ENCODE measurements at regions of chr2 and their contacts with region 1.

Region 1: DNA sequence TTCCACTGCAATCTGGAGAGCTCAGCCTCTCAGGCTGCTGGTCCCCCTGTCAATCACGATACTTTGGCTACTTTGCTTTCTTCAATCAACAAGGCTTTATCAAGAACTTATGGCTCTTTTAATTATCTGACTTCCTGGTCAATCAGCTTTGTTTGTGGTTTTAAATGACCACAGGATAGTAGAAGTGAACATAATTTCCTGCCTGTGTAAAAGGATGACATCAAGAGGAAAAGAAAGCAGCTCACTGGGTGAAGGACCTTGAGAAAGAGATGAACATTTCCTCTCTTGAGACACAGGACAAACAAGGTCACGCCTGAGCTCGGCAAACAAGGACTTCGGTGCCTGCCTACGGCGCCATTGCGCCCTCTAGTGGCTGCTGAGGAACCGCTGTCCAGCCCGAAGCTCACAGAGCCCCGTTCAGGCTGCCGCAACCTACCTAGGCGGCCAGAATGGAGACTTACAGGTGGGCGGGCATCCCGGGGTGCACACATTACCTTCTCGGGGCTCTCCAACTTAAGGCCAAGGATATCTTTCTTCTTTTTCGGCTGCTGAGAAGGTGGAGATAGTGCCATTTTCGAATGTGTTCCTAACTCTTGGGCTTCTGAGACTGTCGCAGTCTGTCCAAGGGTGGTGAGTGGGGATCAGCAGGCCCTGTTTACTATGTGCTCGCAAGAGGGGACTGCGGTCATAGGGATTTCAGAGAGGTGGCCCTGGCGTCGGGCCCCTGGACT is 54.0 kb downstream of the IL1RL2 start:
- DNase-seq: peak; percentile 77
- H3K4me3 Mint-ChIP-seq: no peak overlapping the region
- H3K27ac Mint-ChIP-seq: peak overlapping the region; percentile 40
- H3K4me1 Mint-ChIP-seq: peaks cover 29% of the 10 kb centered on the region
- H3K27me3 Mint-ChIP-seq: no peaks in the 10 kb centered on the region

Region 2: GRCh38 chr2:101823347-101823791 is 417.4 kb before region 1 on chr2:
- intact Hi-C with region 1: loop called (anchors 5 kb)
- DNase-seq: peak; percentile 51
- H3K4me3 Mint-ChIP-seq: peak overlapping the region; percentile 18
- H3K27ac Mint-ChIP-seq: peak overlapping the region; percentile 21
- H3K4me1 Mint-ChIP-seq: peaks cover 63% of the 10 kb centered on the region
- H3K27me3 Mint-ChIP-seq: no peaks in the 10 kb centered on the region

Region 3: DNA sequence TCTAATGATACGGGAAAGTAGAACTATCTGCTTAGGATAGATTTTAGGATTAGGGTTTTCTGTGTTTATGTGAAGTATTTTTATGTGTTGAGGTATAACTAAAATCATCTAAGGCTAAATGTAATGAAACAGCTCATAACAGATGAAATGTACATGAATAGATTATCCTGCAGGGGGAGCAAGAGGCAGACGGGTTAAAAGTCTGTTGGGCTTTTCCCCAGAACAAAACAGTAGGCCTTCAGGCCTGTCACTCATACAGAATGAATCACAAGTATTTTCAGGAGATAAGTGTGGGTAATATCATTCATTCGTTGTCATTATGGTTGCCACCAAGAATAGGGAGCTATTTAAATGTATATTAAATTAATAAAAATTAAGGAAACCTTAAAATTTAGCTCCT is 356.9 kb before region 1 on chr2:
- intact Hi-C with region 1: loop called (anchors 1 kb)
- DNase-seq: no peak
- H3K4me3 Mint-ChIP-seq: no peak overlapping the region
- H3K27ac Mint-ChIP-seq: peak overlapping the region; percentile 24
- H3K4me1 Mint-ChIP-seq: peaks cover 11% of the 10 kb centered on the region
- H3K27me3 Mint-ChIP-seq: no peaks in the 10 kb centered on the region

Region 4: DNA sequence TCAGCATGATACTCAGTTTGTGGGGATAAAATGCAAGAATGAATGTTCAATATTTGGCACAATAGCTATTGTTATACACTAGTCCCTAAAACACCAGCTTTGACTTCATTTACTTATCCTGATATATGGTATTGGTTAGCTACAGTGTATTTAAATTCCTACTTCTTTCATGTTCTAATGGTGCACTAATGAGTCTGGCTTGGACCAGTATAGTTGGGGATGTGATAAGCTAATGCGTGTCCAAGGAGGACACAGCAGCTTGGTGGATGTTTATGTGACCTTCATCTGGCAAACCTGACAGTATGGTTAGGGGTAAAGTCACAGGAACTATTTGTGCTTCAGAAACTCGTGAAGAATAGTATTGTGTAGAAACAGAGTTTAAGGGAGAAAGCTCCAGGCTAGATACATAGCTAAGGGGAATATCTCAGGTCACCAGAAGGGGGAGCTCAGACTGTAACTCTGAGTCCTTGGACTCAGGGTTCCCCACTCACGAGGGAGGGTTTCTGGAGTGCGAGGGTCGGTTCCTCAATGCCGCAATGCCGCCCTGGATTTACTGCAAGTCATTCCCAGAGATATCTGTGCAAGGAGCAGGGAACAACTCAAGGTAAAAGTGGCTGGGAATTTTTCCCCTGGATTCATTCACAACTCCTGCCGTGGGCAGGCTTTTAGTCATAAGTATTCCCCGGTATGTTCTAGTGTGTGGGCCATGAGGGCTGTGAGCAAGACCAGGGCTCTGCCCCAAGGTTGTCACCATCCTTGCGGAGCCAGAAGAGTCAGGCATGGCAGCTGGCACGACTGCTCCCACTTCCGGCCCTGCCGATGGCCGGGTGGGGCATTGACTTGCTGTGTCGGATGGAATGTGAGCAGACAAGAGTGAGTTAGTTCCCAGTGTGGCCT is 234.6 kb before region 1 on chr2:
- intact Hi-C with region 1: loop called (anchors 2 kb)
- DNase-seq: no peak
- H3K4me3 Mint-ChIP-seq: no peak overlapping the region
- H3K27ac Mint-ChIP-seq: no peak overlapping the region
- H3K4me1 Mint-ChIP-seq: peaks cover 13% of the 10 kb centered on the region
- H3K27me3 Mint-ChIP-seq: peaks cover 2% of the 10 kb centered on the region

Region 5: GRCh38 chr2:102020596-102021181 is 220.1 kb before region 1 on chr2:
- intact Hi-C with region 1: loop called (anchors 1 kb)
- DNase-seq: peak; percentile 66
- H3K4me3 Mint-ChIP-seq: no peak overlapping the region
- H3K27ac Mint-ChIP-seq: no peak overlapping the region
- H3K4me1 Mint-ChIP-seq: peaks cover 12% of the 10 kb centered on the region
- H3K27me3 Mint-ChIP-seq: peaks cover 4% of the 10 kb centered on the region

Region 6: DNA sequence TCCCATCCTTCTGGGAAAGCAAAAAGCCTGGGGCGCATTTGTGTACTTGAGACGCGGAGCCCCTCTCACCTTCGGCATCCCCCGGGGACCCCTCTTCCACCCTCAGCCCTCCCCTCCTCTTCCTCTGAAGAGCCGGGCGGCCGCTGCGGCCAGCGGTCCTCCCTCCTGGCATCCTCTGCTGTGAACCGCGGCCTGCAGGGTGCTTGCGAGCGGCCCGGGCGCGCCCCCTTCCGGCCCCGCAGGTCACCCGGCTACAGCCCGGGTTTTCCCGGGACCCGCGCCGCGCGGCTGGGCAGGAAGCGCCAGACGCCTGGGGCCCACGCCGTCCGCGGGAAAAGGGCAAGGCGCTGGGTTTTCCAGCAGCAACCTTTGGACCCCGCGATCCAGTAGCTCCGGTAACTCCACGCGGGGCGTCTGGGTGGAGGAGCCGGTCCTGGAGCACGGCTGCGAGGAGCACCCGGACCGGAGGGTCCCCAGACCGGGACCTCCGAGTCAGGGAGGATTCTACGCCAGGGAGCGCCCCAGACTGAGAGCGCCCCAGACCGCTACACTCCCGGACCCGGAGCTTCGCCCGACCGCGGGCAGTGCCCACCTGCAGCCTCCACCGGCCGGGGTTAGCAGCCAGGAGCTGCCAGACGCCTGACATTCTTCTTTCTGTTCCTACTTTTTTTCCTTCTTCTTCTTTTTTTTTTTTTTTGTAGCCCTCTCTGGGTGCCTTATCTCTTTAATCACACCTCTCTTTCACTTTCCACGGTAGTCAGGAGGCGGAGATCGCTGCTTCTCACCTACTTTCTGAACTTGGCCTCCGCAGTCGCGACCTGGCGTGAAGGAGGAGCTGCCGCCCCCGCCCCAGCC is 114.9 kb after region 1 on chr2 and contains the start of gene IL18R1:
- intact Hi-C with region 1: loop called (anchors 1 kb)
- DNase-seq: peak; percentile 68
- H3K4me3 Mint-ChIP-seq: peak within 1 kb of the TSS; percentile 98
- H3K27ac Mint-ChIP-seq: peak within 1 kb of the TSS; percentile 93
- H3K4me1 Mint-ChIP-seq: peaks cover 45% of the 10 kb centered on the region
- H3K27me3 Mint-ChIP-seq: no peaks in the 10 kb centered on the region
- total RNA-seq, gene IL18R1: 61.9 and 68.2 TPM in 2 replicates

Region 7: DNA sequence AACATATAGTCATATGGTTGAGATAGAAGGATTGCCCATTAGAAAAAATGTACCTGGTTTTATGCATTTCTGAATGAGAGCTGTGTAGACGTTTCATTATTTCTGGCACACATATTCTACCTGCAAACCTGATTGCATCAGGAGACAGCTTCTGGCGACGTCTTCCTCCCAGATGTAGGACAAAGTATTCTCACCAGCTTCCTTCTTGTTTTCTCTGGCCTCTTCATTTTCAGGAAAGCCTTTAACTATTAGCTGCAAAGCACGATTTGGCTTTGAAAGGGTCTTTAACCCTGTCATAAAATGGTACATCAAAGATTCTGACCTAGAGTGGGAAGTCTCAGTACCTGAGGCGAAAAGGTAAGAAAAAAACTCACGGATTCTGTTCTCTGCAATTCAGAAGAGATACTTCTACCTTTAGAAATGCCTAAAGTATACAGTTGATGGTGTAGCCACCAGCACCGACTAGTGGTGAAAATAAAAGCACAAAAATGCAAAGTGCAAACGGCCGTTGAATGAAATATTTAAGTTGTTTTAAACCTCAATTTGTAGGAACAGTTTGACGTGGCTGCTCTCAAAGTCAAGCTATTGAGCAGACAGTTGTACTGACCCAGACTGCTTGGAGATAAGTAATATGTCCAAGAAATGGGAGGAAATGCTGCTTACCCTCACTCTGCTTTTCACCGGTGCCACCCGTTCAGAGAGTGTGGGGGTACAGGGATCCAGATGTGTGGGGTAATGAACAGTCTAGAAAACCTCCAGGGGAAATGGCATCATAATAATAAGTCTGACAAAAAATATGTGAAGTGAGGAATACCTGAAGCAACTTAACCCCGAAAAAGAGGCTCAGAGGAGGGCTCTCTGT is 202.4 kb after region 1 on chr2:
- intact Hi-C with region 1: loop called (anchors 2 kb)
- DNase-seq: peak; percentile 21
- H3K4me3 Mint-ChIP-seq: peak overlapping the region; percentile 33
- H3K27ac Mint-ChIP-seq: peak overlapping the region; percentile 47
- H3K4me1 Mint-ChIP-seq: peaks cover 13% of the 10 kb centered on the region
- H3K27me3 Mint-ChIP-seq: no peaks in the 10 kb centered on the region

Measured in activated T-helper 2 cell treated with anti-CD3 and anti-CD28 coated beads, Interferon-gamma antibody, Interleukin-2, Interleukin-4, amounts not matched to agents 10 μg/mL and 5 μg/mL and 100 μg/mL, durations not matched to agents 14 hours and 24 hours and 36 hours (primary cell).